Right ventricle myocardium inferior (tissue), 1 donor: ENCODE measurements at regions of chr1 and their contacts with region 1.

Region 1: GRCh38 chr1:55584526-55585401 is 369.6 kb upstream of the USP24 start:
- DNase-seq: no peak
- ATAC-seq: peak; percentile 23

Region 2: DNA sequence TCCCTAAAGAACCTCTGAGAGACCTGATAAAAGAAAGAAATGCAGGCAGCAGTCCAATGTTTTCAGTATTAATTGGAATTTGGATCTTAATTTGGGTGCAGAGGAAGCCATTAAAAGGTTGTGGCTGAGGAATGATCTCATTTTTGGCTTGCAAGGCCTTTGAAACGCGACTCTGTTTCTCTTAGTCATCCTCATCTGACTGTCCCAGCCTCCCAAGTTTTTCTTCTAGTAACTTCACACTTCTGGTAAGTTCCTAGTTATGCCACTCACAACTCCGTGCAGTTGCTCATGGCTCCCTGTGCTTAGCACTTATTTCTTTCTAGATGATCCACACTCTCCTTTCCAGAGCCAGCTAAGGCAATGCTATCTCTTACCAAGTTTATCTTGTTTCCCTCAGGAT is 222.2 kb before region 1 on chr1:
- intact Hi-C with region 1: loop called (anchors 10 kb)
- DNase-seq: no peak
- ATAC-seq: peak; percentile 90

Region 3: DNA sequence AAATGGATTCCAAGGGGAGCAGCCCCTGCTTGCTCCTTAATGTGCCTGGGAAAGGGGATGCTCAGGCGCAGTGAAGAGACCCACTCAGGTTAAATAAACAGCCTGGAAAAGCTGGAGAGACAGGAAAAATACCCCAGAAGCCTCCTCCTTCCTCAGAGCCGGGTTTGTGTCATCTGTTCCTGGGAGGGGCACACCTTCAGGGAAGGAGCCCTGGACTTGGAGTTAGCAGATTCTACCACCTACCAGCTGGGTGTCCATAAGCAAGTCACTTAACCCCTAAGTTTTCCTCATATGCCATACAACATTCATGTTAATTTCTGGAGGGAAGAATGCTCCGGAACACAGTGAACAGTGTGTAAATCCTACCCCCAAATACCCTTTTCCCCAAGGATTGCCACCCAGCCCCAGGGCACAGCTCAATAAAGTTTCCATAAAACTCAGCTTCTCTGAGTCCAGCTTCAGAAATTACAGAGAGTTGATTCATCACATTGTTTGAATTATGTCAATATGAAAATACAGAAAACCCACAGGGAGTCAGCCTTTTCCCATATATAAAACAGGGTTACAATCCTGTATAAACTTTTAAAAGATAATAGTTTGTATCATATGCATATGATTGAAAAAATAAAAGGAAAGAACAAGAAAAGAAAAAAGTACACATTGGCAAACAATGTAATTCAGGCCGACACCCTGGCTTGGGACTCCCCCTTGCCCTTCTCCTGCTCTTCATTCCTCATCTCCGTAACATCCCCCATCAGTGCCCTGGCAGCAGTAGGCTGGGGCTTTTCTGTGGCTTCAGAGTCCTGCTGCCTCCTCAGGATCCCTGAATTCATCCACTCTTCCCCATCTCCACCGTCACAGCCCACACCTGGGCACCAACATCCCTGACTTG is 77.8 kb before region 1 on chr1:
- intact Hi-C with region 1: no loop called
- DNase-seq: no peak
- ATAC-seq: no peak

Region 4: GRCh38 chr1:55974714-55975511 is 390.1 kb after region 1 on chr1:
- intact Hi-C with region 1: no loop called
- DNase-seq: no peak
- ATAC-seq: peak; percentile 64